CD4-positive, alpha-beta T cell (primary cell): ENCODE measurements at regions of chr2 and their contacts with region 1.

Region 1: GRCh38 chr2:64052468-64053241 is 33.4 kb upstream of the VPS54 start:
- DNase-seq: peak in 5 of 14 experiments; percentile 27 to 56 (median 35)
- ATAC-seq: peak; percentile 53
- H3K4me3 ChIP-seq: no peak overlapping the region
- H3K4me3 Mint-ChIP-seq: peak overlapping the region; percentile 13
- H3K27ac ChIP-seq: no peak overlapping the region
- H3K27ac Mint-ChIP-seq: peak overlapping the region; percentile 55
- H3K4me1 ChIP-seq: peaks cover 15% of the 10 kb centered on the region
- H3K4me1 Mint-ChIP-seq: peaks cover 51% of the 10 kb centered on the region
- H3K27me3 ChIP-seq: no peaks in the 10 kb centered on the region
- H3K27me3 Mint-ChIP-seq: no peaks in the 10 kb centered on the region
- CTCF ChIP-seq: no peak

Region 2: DNA sequence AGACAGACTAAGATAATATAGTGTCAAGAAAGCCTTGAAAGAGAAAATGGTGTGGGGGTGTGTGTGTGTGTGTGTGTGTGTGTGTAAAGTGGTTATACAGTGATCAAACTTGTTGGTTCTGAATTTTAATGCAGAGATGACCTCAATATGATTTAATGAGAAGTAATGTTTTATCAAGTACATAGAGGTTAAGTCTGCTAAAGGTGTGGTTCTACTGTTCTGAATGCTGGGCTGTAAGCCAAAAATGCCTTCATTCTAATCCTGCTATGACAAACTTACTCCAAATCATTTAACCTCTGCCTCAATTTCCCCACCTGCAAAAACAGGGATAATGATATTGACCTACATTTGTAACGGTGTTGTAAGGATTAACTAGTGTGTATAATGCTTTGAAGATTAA is 552.3 kb before region 1 on chr2:
- CTCF ChIA-PET with region 1: no interaction called
- POLR2A ChIA-PET with region 1: no interaction called
- intact Hi-C with region 1: no loop called
- DNase-seq: no peak
- ATAC-seq: no peak
- H3K4me3 ChIP-seq: no peak overlapping the region
- H3K4me3 Mint-ChIP-seq: no peak overlapping the region
- H3K27ac ChIP-seq: no peak overlapping the region
- H3K27ac Mint-ChIP-seq: no peak overlapping the region
- H3K4me1 ChIP-seq: no peaks in the 10 kb centered on the region
- H3K4me1 Mint-ChIP-seq: no peaks in the 10 kb centered on the region
- H3K27me3 ChIP-seq: no peaks in the 10 kb centered on the region
- H3K27me3 Mint-ChIP-seq: no peaks in the 10 kb centered on the region
- CTCF ChIP-seq: no peak

Region 3: DNA sequence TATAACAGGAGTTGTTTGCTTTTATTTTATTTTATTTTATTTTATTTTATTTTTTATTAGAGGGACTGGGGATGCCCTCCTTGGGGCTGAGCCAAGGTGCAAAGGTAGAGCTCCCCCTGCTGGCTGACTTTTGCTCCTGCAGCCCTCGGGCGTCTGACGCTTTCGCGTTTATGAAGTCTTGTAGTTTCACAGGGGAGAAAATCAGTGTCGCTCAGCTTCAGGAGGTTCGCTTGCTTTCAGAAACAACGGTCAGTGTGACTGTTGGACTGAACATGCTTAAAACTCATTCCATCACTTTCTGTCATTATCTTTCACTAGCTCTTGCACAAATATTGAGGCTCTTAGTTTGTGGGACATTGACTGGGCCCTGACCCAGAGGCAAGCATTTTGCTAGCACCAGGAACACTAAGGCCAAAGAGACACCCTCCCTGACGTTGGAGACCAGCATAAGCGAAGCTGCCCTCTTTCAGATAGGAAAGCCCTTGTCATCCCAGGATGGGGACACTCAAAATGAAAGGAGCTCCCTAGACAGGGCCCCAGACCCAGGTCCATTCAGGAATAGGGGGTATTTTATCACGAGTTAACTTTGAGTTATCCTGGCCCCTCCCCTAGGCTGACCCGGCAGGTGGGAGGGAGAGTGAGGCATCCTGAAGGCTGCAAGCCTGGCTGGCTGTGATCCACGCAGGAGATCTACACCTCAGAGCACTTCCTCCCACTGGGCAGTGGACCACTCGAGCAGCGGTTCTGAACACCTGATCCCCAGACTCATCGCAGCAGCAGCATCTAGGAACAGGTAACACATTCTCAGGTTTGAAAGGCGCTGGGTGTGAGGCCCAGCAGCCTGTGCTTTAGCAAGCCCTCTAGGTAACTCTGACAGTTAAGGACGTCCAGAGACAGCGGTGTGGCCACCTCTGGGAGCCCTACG is 435.7 kb after region 1 on chr2:
- CTCF ChIA-PET with region 1: interaction called, 34 read pairs
- POLR2A ChIA-PET with region 1: interaction called, 7 read pairs
- intact Hi-C with region 1: loop called (anchors 1 kb)
- DNase-seq: peak; percentile 63 to 88 (median 76)
- ATAC-seq: peak; percentile 88
- H3K4me3 ChIP-seq: no peak overlapping the region
- H3K4me3 Mint-ChIP-seq: no peak overlapping the region
- H3K27ac ChIP-seq: no peak overlapping the region
- H3K27ac Mint-ChIP-seq: no peak overlapping the region
- H3K4me1 ChIP-seq: peaks cover 15% of the 10 kb centered on the region
- H3K4me1 Mint-ChIP-seq: peaks cover 11% of the 10 kb centered on the region
- H3K27me3 ChIP-seq: no peaks in the 10 kb centered on the region
- H3K27me3 Mint-ChIP-seq: peaks cover 5% of the 10 kb centered on the region
- CTCF ChIP-seq: peak; percentile 99

Region 4: DNA sequence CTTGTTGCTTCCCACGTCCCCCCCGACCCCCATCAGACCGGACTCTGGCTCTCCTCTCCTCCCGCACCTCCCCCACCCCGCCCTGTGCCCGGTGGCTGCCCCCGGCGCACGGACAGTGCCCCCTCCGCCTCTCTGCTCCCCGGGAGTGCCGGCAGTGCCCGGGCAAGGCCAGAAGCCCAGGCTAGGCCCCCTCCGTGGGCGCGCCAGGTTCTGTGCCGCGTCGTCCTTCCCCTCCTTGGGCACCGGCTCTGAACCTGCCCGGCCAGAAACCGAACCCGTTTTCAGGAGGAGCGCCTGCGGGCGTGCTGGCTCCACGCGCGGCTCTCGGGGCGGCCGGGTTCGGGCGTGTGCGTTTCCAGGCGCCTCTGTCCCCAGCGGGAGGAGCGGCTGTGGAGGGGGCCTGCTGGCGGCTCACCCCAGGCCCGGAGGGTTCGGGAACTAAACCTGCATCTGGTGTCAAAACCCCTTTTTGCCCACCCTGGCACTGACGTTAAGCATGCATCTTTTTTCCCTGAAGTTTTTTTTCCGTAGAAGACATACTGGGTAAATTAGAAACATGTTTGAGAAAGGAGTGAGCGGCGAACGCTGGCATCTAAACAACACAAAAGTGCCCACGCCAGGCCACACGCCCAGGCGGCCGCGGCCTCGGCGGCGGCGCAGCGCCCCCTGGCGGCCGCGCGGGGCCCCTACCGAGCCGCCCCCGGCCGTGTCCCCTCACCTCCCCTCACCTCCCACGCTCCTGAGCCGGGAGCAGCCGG is 812.6 kb after region 1 on chr2:
- CTCF ChIA-PET with region 1: no interaction called
- POLR2A ChIA-PET with region 1: no interaction called
- intact Hi-C with region 1: loop called (anchors 5 kb)
- DNase-seq: peak; percentile 32 to 85 (median 58)
- ATAC-seq: peak; percentile 94
- H3K4me3 ChIP-seq: peak overlapping the region; percentile 62
- H3K4me3 Mint-ChIP-seq: peak overlapping the region; percentile 78
- H3K27ac ChIP-seq: no peak overlapping the region
- H3K27ac Mint-ChIP-seq: no peak overlapping the region
- H3K4me1 ChIP-seq: peaks cover 18% of the 10 kb centered on the region
- H3K4me1 Mint-ChIP-seq: no peaks in the 10 kb centered on the region
- H3K27me3 ChIP-seq: peaks cover 0 to 3% of the 10 kb centered on the region in 2 experiments
- H3K27me3 Mint-ChIP-seq: peaks cover 5% of the 10 kb centered on the region
- CTCF ChIP-seq: no peak